ENCODE measurements at regions of chr22 and their contacts with region 1.

Region 1: DNA sequence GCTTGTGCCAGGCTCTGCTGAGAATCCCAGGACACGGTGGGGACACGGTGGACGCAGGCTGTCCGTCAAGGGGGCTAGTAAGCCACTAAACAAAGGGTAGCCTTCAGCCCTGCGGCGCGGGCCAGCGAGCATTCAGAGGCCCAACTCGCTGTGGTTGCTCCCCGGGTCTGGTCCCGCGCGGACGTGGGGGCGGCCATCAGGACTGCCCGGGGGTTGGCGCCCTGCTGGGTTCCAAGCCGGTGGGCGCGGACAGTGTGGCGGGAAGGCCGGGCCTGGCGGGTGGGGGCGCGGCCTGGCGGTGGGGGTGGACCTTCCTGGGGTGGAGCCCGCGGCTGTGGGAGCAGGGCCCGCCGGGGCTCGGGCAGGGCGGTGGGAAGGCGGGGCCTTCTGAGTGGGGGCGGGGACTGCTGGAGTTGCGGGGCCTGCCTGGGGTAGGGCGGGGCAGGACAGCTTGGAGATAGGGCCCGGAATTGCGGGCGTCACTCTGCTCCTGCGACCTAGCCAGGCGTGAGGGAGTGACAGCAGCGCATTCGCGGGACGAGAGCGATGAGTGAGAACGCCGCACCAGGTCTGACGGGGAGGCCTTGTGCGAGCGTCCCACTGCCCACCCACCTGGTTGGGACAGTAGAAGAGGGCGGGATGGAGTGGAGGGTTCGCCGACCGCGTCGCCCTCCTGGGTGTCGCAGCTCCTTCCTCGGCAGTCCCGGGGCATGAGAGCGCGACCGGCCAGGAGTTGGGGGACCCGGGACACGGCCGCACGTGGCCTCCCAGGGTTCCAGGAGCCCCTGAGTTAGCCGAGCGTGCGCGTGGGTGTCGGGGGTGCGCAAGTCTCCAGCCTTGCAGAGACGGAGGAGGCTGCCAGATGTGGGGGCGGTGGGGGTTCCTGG is at the start of gene SERHL2:
- DNase-seq: peak; percentile 91
- ATAC-seq: peak; percentile 99
- H3K4me3 Mint-ChIP-seq: peak within 1 kb of the TSS; percentile 69
- H3K27ac Mint-ChIP-seq: peak within 1 kb of the TSS; percentile 51
- H3K4me1 Mint-ChIP-seq: peaks cover 6% of the 10 kb centered on the region
- H3K27me3 Mint-ChIP-seq: no peaks in the 10 kb centered on the region
- total RNA-seq, gene SERHL2: 0.78 to 2.1 TPM

Region 2: DNA sequence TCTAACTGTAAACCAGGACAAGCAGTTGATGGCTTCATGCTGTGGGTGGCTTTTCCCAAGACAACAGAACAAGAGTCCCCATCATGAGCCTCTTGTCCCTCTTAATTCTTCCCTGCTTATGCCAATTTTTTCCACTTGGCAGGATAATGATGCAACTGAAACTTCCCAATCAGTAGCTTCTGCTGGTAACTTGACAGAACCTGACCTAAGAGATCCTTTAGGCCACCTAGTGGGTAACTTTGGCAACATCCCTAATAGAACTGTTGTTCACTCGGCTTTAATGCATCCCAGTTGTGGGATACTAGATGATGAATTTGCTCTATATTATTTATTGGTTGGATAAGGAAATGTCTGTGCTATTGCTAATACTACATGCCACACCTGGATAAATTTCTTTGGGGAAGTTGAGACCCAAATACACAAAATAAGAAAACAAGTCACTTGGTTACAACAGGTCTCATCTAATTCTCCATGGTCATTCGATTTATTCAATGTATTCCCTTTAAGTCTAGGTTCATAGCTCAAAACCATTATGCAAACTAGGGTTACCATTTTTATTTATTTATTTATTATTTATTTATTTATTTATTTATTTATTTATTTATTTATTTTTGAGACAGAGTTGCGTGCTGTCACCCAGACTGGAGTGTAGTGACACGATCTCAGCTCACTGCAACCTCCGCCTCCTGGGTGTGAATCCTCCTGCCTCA is 80.1 kb before region 1 on chr22:
- CTCF ChIA-PET with region 1: no interaction called
- POLR2A ChIA-PET with region 1: no interaction called
- intact Hi-C with region 1: no loop called
- DNase-seq: no peak
- ATAC-seq: peak; percentile 64
- H3K4me3 Mint-ChIP-seq: no peak overlapping the region
- H3K27ac Mint-ChIP-seq: no peak overlapping the region
- H3K4me1 Mint-ChIP-seq: peaks cover 6% of the 10 kb centered on the region
- H3K27me3 Mint-ChIP-seq: no peaks in the 10 kb centered on the region

Region 3: GRCh38 chr22:42500161-42500835 is 53.4 kb before region 1 on chr22:
- CTCF ChIA-PET with region 1: no interaction called
- POLR2A ChIA-PET with region 1: no interaction called
- intact Hi-C with region 1: loop called in 1 of 2 experiments (anchors 2 kb)
- DNase-seq: peak; percentile 91
- ATAC-seq: peak; percentile 98
- H3K4me3 Mint-ChIP-seq: peak overlapping the region; percentile 38
- H3K27ac Mint-ChIP-seq: no peak overlapping the region
- H3K4me1 Mint-ChIP-seq: peaks cover 11% of the 10 kb centered on the region
- H3K27me3 Mint-ChIP-seq: no peaks in the 10 kb centered on the region

Region 4: DNA sequence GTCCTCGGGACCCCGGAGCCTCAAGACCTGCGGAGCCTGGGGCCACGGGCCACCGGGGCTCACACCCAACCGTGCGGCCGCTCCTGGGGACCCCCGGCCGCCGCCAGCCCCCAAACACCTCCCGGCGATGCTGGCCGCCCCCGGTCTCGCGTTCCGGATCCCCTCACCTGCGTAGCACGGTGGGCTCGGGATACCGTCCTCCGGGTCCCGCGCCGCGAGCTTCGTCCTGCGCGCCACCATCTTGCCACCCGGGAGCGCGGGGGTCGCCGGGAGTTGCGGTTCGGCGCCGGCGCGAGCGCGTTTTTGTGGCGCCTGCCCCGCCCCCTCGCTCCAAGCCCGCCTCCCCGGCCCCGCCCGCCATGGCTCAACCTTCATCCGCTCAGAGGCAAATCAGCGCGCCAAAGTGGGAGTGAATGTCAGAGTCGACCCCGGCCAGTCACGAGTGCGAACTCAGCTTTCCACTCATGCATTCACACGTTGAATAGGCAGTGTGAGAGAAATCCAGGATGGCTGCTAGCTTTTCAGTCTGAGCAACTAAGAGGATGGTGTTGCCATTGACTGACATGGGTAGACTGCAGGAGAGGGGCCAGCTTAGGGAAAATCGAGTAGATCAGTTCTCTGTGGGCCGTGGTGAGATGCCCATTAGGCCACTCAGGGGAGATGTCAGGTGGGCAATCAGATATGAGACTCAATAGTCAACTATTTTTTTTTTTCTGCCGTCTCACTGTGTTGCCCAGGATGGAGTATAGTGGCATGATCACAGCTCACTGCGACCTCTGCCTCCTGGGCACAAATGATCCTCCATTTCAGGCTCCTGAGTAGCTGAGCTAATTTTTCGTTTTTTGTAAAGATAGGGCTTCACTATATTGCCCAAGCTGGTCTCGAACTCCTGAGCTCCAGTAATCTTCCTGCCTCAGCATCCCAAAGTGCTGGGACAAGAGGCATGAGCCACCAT is 28.3 kb after region 1 on chr22:
- CTCF ChIA-PET with region 1: no interaction called
- POLR2A ChIA-PET with region 1: no interaction called
- intact Hi-C with region 1: loop called in 1 of 2 experiments (anchors 2 kb)
- DNase-seq: peak; percentile 94
- ATAC-seq: peak; percentile 88
- H3K4me3 Mint-ChIP-seq: peak overlapping the region; percentile 94
- H3K27ac Mint-ChIP-seq: peak overlapping the region; percentile 87
- H3K4me1 Mint-ChIP-seq: peaks cover 9% of the 10 kb centered on the region
- H3K27me3 Mint-ChIP-seq: no peaks in the 10 kb centered on the region

Region 5: DNA sequence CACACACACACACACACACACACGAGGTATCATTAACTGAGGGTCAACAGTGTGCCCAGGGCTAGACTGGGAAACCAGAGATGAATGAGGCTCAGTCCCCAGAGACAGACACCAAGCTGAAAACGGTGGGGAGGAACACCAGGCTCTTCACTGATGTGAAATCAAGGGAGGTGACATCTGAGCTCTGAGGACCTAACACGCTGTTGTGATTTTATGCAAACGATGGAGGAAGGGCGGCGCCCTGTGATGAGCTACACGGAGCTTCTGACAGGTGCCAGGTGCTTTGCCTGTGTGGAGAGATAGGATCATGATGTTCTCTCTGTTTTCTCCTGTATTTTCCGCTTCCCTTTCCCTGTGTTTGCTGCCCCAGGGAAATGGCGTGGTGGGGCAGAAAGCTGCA is 102.0 kb after region 1 on chr22:
- CTCF ChIA-PET with region 1: no interaction called
- POLR2A ChIA-PET with region 1: no interaction called
- intact Hi-C with region 1: no loop called
- DNase-seq: no peak
- ATAC-seq: no peak
- H3K4me3 Mint-ChIP-seq: no peak overlapping the region
- H3K27ac Mint-ChIP-seq: no peak overlapping the region
- H3K4me1 Mint-ChIP-seq: no peaks in the 10 kb centered on the region
- H3K27me3 Mint-ChIP-seq: peaks cover 2% of the 10 kb centered on the region

Measured in activated CD4-positive, alpha-beta T cell treated with anti-CD3 and anti-CD28 coated beads for 36 hours (primary cell).